Heart left ventricle (tissue), 16 donors: ENCODE measurements at regions of chr12 and their contacts with region 1.

Region 1: DNA sequence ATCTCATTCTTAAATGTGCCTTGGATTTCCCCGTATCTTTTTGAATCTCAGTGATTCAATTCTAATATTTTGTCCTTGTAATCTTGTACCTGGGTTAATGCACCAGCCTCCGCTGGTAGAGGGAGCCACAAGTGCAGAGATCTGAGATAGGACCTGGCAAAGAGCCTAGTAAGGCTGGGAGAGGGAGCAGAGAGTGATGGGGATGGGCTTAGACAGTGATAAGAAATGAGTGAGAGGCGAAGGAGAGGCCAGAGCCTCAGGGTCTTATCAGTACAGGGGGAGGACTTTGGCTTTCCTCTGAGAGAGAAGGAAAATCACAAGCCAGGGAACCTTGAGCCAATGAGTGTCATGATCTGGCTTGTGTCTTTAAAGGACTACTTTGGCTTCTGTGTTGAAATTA is 30.5 kb upstream of the LMNTD1 start:
- DNase-seq: peak in 2 of 5 donors; percentile 14 to 30
- ATAC-seq: peak in 3 of 4 donors; percentile 41 to 84 (median 43)
- H3K4me3 ChIP-seq: no peak overlapping the region
- H3K27ac ChIP-seq: no peak overlapping the region
- H3K4me1 ChIP-seq: peaks cover 0 to 15% (median 0%) of the 10 kb centered on the region in 12 donors
- H3K27me3 ChIP-seq: no peaks in the 10 kb centered on the region
- CTCF ChIP-seq: peak in 5 of 12 donors; percentile 6 to 27 (median 18)
- POLR2A ChIP-seq: no peak

Region 2: GRCh38 chr12:26017484-26018206 is 434.1 kb after region 1 on chr12:
- intact Hi-C with region 1: loop called in 2 of 10 experiments (anchors 10 kb)
- DNase-seq: peak in 1 of 5 donors; percentile 21
- ATAC-seq: peak in 3 of 4 donors; percentile 39 to 68 (median 49)
- H3K4me3 ChIP-seq: peak overlapping the region in 1 of 12 donors; percentile 5
- H3K27ac ChIP-seq: peak overlapping the region in 1 of 12 donors; percentile 12
- H3K4me1 ChIP-seq: peaks cover 0 to 42% (median 11%) of the 10 kb centered on the region in 12 donors
- H3K27me3 ChIP-seq: no peaks in the 10 kb centered on the region
- CTCF ChIP-seq: peak; percentile 35 to 75 (median 59)
- POLR2A ChIP-seq: no peak